ENCODE measurements at regions of chr5 and their contacts with region 1.

Region 1: DNA sequence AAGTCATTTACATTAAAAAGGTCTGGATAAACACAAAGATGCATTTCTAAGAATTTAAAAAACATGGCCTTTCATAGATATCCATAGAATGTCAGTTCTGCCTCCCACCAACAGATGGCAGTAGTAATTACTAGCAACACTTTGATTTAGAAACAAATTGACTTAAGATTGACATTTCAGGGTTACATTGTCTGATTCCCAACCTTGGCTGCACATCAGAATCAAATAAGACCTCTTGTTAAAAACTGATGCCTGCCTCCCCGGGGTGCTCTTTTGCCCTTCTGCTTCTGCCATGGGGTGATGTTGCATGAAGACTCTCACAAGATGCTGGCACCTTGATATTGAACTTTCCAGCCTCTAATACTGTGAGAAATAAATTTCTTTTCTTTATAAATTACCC is 146.2 kb upstream of the GPR151 start:
- DNase-seq: peak; percentile 22
- H3K4me3 ChIP-seq: no peak overlapping the region
- H3K27ac ChIP-seq: no peak overlapping the region
- H3K4me1 ChIP-seq: no peaks in the 10 kb centered on the region
- H3K27me3 ChIP-seq: no peaks in the 10 kb centered on the region
- CTCF ChIP-seq: peak; percentile 63 to 72

Region 2: GRCh38 chr5:146778795-146779194 is 116.6 kb after region 1 on chr5:
- CTCF ChIA-PET with region 1: no interaction called
- dilution Hi-C with region 1: no loop called
- in situ Hi-C with region 1: no loop called
- intact Hi-C with region 1: loop called (anchors 10 kb)
- DNase-seq: no peak
- H3K4me3 ChIP-seq: no peak overlapping the region
- H3K27ac ChIP-seq: no peak overlapping the region
- H3K4me1 ChIP-seq: no peaks in the 10 kb centered on the region
- H3K27me3 ChIP-seq: no peaks in the 10 kb centered on the region
- CTCF ChIP-seq: no peak

Region 3: DNA sequence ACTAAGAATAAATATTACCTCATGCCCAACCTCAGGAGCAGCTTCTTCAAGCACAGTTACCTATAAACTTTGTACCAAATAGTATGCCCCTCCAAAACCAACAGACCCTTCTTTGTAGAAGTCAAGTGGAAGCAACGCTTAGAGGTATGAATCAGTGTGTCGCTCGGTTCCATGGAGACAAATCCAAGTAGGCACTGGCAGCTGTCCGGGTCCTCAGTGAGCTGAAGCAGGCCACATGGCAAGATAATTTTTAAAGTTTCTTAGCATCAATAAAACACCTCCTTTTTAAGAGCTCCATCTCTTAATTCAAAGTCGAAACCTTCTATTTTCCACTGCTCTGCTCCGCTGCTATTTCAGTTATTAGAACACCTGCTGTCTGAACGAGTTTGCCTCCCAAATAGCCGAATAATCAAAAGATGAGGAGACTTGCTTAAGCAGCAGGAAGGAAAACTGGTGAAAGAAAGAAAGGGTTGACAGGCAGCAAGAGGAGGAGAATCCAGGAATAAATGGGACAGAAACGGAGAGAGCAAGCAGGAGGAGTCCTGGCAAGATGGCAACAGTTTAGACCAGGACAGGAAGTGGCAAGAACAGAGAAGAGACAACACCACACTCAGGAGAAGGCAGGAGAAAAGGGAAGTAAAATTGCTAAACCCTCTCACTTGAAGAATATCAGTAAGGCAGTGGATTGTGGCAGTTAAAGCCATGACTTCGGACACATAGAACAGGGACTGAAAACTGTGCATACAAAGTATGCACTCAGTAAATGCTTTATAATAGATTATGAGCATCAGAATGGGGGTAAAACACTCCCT is 151.3 kb after region 1 on chr5:
- CTCF ChIA-PET with region 1: no interaction called
- dilution Hi-C with region 1: no loop called
- in situ Hi-C with region 1: no loop called
- intact Hi-C with region 1: loop called (anchors 10 kb)
- DNase-seq: no peak
- H3K4me3 ChIP-seq: no peak overlapping the region
- H3K27ac ChIP-seq: no peak overlapping the region
- H3K4me1 ChIP-seq: peaks cover 3% of the 10 kb centered on the region
- H3K27me3 ChIP-seq: no peaks in the 10 kb centered on the region
- CTCF ChIP-seq: no peak

Region 4: DNA sequence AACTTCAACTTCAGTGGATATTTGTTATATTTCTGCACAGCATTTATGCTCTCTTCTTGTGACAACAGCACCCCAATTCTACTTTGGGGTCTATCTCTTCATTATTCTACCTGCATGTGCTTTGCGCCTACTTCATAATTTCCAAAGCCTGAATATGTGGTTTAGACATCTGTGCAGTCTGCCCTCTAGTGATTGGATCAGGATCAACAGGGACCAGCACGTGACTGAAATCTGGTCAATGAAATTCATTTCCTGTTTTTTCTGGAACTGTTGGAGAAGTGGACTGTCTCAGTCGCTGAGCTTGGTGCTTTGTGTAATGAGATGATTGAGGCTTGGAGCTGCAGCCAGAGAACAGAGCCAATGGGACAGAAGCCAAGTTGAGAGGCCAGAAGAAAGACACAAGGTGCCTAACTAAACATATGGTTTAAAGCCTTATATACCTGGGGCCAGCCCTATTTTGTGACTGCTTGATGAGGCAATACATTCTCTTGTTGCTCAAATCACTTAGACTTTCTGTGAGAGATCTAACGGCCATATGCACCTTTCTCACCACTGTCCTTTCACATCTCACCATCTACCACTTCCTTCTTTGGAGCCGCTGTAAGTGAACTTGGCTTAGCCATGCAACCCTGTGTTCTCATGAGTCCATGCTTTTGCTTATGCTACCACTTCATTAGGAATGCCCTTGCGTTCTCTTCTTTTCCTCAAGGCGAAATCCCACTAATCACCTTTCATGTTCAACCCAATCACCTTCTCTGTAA is 285.1 kb after region 1 on chr5:
- CTCF ChIA-PET with region 1: no interaction called
- dilution Hi-C with region 1: no loop called
- in situ Hi-C with region 1: no loop called
- intact Hi-C with region 1: loop called (anchors 1 kb)
- DNase-seq: peak; percentile 11
- H3K4me3 ChIP-seq: no peak overlapping the region
- H3K27ac ChIP-seq: no peak overlapping the region
- H3K4me1 ChIP-seq: no peaks in the 10 kb centered on the region
- H3K27me3 ChIP-seq: no peaks in the 10 kb centered on the region
- CTCF ChIP-seq: peak; percentile 51 to 57